PC-9 (cell line): ENCODE measurements at regions of chr7 and their contacts with region 1.

Region 1: GRCh38 chr7:138886501-138886917 is 88.5 kb upstream of the ATP6V0A4 start:
- DNase-seq: peak; percentile 45 to 56
- H3K4me3 ChIP-seq: no peak overlapping the region
- H3K27ac ChIP-seq: no peak overlapping the region
- H3K4me1 ChIP-seq: peaks cover 26% of the 10 kb centered on the region
- H3K27me3 ChIP-seq: no peaks in the 10 kb centered on the region
- CTCF ChIP-seq: peak; percentile 85

Region 2: GRCh38 chr7:138515001-138515528 is 371.4 kb before region 1 on chr7:
- CTCF ChIA-PET with region 1: no interaction called
- POLR2A ChIA-PET with region 1: no interaction called
- intact Hi-C with region 1: no loop called
- DNase-seq: no peak
- H3K4me3 ChIP-seq: no peak overlapping the region
- H3K27ac ChIP-seq: no peak overlapping the region
- H3K4me1 ChIP-seq: no peaks in the 10 kb centered on the region
- H3K27me3 ChIP-seq: no peaks in the 10 kb centered on the region
- CTCF ChIP-seq: no peak

Region 3: DNA sequence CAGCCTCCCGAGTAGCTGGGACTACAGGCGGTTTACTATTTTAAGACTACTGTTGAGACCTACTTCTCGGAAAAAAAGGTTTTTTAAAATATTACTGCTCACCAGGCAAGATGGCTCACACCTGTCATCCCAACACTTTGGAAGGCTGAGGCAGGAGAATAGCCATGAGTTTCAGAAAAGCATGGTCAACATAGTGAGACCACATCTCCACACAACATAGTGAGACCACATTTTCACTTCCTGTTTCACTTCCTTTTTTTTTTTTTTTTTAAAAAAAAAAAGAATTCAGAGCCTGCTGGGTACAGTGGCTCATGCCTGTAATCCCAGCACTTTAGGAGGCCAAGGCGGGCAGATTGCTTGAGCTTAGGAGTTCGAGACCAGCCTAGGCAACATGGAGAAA is 231.9 kb before region 1 on chr7:
- CTCF ChIA-PET with region 1: no interaction called
- POLR2A ChIA-PET with region 1: no interaction called
- intact Hi-C with region 1: no loop called
- DNase-seq: no peak
- H3K4me3 ChIP-seq: no peak overlapping the region
- H3K27ac ChIP-seq: no peak overlapping the region
- H3K4me1 ChIP-seq: peaks cover 27% of the 10 kb centered on the region
- H3K27me3 ChIP-seq: no peaks in the 10 kb centered on the region
- CTCF ChIP-seq: no peak

Region 4: GRCh38 chr7:138842111-138842510 is 44.4 kb before region 1 on chr7:
- CTCF ChIA-PET with region 1: no interaction called
- POLR2A ChIA-PET with region 1: no interaction called
- intact Hi-C with region 1: no loop called
- DNase-seq: peak in 1 of 2 experiments; percentile 63
- H3K4me3 ChIP-seq: no peak overlapping the region
- H3K27ac ChIP-seq: no peak overlapping the region
- H3K4me1 ChIP-seq: no peaks in the 10 kb centered on the region
- H3K27me3 ChIP-seq: no peaks in the 10 kb centered on the region
- CTCF ChIP-seq: no peak

Region 5: DNA sequence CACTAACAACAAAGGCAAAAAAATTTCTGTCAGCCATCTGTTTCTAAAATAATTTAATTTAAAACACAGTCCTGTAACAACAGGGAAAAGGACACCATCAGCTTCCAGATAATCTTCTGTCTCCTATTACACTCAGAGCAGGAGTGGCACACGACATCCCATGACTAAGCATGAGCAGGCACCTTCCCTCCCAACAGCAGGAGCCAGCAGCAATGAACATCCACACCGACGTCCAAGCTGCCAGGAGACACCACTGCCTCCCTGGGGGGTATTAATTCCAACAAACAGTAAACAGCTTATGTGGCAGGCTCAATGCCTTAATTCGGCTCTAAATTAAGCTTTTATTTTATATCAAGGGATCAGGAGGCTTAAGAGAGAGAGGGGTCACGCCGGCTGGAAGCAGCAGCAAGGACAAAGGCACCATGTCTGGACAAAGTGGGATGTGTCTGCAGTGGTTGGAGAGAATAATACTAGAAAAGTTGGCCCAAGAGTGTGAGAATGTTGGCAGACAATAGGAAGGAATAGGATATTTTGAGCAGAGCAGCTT is 49.0 kb after region 1 on chr7:
- CTCF ChIA-PET with region 1: interaction called, 7 read pairs
- POLR2A ChIA-PET with region 1: no interaction called
- intact Hi-C with region 1: loop called (anchors 1 kb)
- DNase-seq: peak; percentile 73 to 85
- H3K4me3 ChIP-seq: no peak overlapping the region; the same call in 1 of the 2 replicates
- H3K27ac ChIP-seq: peak overlapping the region; percentile 72
- H3K4me1 ChIP-seq: peaks cover 27% of the 10 kb centered on the region
- H3K27me3 ChIP-seq: no peaks in the 10 kb centered on the region
- CTCF ChIP-seq: no peak

Region 6: GRCh38 chr7:138981332-138982203 is 95.1 kb after region 1 on chr7 and contains the start of gene KIAA1549:
- CTCF ChIA-PET with region 1: interaction called, 11 read pairs
- POLR2A ChIA-PET with region 1: interaction called, 5 read pairs
- intact Hi-C with region 1: loop called (anchors 1 kb)
- DNase-seq: peak in 1 of 2 experiments; percentile 78
- H3K4me3 ChIP-seq: peak within 1 kb of the TSS; percentile 73
- H3K27ac ChIP-seq: no peak within 1 kb of the TSS
- H3K4me1 ChIP-seq: peaks cover 34% of the 10 kb centered on the region
- H3K27me3 ChIP-seq: no peaks in the 10 kb centered on the region
- CTCF ChIP-seq: no peak
- total RNA-seq, gene KIAA1549: 20.2 and 26.6 TPM in 2 replicates

Region 7: GRCh38 chr7:139075031-139075652 is 188.6 kb after region 1 on chr7:
- CTCF ChIA-PET with region 1: interaction called, 20 read pairs
- POLR2A ChIA-PET with region 1: no interaction called
- intact Hi-C with region 1: loop called (anchors 1 kb)
- DNase-seq: peak; percentile 55 to 61
- H3K4me3 ChIP-seq: no peak overlapping the region
- H3K27ac ChIP-seq: peak overlapping the region; percentile 25; the same call in 1 of the 2 replicates
- H3K4me1 ChIP-seq: no peaks in the 10 kb centered on the region; the same call in 1 of the 2 replicates
- H3K27me3 ChIP-seq: no peaks in the 10 kb centered on the region
- CTCF ChIP-seq: peak; percentile 93